Common myeloid progenitor, CD34-positive (primary cell): ENCODE measurements at regions of chr22 and their contacts with region 1.

Region 1: DNA sequence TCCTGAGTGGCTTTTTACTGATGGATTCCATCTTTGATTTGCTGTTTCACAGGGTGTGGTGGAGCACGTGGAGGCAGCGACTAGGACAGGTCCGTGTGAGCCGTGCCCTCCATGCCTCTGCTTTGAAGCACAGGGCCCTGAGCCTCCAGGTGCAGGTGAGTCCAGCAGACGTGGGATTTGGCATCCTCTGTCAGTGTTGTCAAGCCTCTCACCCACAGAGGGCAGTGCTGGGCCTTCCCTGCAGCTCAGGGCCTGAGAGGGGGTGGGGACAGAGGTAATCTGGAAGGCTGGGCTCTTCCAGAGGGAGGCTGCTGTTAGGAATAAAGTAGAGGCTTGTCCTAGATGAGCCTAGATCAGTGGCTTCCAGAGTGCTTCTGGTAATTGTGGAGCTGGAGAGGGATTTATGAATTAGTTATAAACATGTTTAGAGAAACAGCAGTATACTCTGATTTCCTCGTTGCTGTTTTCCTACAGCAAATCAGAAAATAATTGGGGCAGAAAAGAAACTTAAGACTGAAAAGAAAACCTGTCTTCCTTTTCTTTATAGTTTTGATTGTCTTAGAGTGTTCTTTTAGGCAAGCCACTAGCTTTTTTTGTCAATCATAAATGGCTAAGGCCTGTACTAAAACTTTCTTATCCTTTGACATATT is 65.0 kb downstream of the SFI1 start:
- DNase-seq: peak; percentile 38 to 54 (median 51)
- H3K4me3 ChIP-seq: no peak overlapping the region
- H3K27ac ChIP-seq: no peak overlapping the region
- H3K4me1 ChIP-seq: no peaks in the 10 kb centered on the region
- H3K27me3 ChIP-seq: no peaks in the 10 kb centered on the region

Region 2: GRCh38 chr22:31574055-31574670 is 12.8 kb after region 1 on chr22:
- CTCF ChIA-PET with region 1: interaction called, 11 read pairs
- POLR2A ChIA-PET with region 1: interaction called, 3 read pairs
- DNase-seq: no peak
- H3K4me3 ChIP-seq: no peak overlapping the region
- H3K27ac ChIP-seq: no peak overlapping the region
- H3K4me1 ChIP-seq: no peaks in the 10 kb centered on the region
- H3K27me3 ChIP-seq: no peaks in the 10 kb centered on the region

Region 3: DNA sequence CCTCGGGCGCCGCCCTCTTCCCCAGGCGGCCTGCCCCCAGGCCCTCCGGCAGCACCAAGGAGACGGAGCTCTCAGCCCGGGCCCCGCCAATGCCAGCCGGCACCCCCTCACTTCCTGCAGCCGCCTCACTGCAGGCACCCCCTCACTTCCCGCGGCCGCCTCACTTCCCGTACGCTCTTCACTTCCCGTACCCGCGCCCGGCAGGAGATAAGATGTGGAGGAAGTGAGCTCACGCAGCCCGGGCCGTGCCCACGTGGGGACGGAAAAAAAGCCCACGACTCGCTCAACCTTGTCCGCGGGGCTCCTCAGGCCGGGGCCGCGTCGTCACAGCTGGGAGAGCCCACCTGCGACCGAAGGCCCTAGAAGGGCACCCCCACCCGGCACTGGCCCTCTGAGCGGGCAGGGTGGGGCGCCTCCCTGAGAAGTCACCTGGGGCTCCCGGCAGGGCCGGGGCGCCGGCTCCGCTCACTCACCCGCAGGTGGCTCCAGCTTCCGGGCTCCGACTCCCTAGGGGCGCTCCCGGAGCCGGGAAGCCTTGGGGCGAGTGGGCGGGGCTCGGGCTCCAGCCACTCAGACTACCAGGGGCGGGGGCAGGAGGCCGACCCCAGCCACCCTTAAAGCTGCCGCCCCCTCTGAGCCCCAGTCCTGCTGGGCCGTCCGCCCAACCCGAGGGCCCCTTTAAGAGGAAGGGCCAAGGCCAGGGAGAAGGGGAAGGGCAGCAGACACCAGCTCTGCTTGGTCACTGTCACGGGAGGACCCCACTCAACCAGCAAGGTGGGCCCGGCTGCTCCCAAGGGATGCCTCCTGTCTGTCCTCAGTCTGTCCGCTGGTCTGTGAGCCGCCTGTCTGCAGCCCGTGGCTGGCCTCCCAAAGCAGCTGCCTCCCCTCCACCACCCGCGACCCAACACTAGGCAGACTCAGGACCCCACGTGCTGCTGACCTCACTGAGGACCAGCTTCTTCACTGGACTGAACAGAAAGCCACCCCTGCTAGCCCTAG is 69.3 kb after region 1 on chr22:
- CTCF ChIA-PET with region 1: interaction called, 48 read pairs
- POLR2A ChIA-PET with region 1: no interaction called
- DNase-seq: peak; percentile 91 to 97 (median 93)
- H3K4me3 ChIP-seq: peak overlapping the region; percentile 23 to 86 (median 74)
- H3K27ac ChIP-seq: peak overlapping the region; percentile 40 to 82
- H3K4me1 ChIP-seq: peaks cover 0 to 55% (median 38%) of the 10 kb centered on the region in 4 experiments
- H3K27me3 ChIP-seq: no peaks in the 10 kb centered on the region

Region 4: GRCh38 chr22:31637938-31638618 is 76.7 kb after region 1 on chr22:
- CTCF ChIA-PET with region 1: interaction called, 48 read pairs
- POLR2A ChIA-PET with region 1: no interaction called
- DNase-seq: peak; percentile 74 to 88 (median 83)
- H3K4me3 ChIP-seq: peak overlapping the region; percentile 20 to 80 (median 63)
- H3K27ac ChIP-seq: peak overlapping the region; percentile 75 to 87
- H3K4me1 ChIP-seq: peaks cover 4 to 50% (median 36%) of the 10 kb centered on the region in 4 experiments
- H3K27me3 ChIP-seq: no peaks in the 10 kb centered on the region